Posterior vena cava (tissue), 2 donors: ENCODE measurements at regions of chr9 and their contacts with region 1.

Region 1: GRCh38 chr9:36415822-36416515 is 15.9 kb upstream of the RNF38 start:
- DNase-seq: no peak

Region 2: GRCh38 chr9:36086442-36086841 is 329.5 kb before region 1 on chr9:
- intact Hi-C with region 1: loop called in 1 of 2 experiments (anchors 5 kb)
- DNase-seq: no peak

Region 3: GRCh38 chr9:36110434-36110833 is 305.5 kb before region 1 on chr9:
- intact Hi-C with region 1: no loop called
- DNase-seq: no peak